ENCODE measurements at regions of chr6 and their contacts with region 1.

Region 1: DNA sequence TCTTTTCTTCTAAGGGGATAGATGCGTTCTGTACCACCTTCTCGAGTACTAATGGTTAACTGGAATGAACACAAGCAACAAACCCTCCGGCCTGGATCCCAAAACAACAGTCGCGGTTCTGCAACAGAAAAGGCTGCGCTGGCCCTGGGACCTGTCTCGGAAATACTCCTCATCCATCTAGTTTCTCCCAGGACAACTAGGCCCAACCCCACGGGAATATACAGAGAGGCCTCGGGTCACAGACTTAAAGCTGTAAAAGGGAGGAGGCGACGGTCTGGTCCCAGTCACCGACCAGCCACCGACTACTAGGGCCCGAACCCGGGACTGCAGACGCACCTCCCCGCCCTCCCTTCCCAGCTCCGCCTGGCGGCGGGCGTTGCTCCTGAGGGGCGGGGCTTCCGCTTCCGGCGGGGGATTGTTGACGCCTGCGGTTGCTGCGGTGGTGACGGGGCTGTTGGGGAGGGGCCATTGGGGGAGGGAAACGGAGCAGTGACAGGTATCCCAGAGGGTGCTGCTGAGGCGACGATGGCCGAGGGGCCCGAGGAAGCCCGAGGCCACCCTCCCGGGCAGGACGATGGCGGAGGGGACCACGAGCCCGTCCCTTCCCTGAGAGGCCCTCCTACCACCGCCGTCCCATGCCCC is at the start of gene FAM8A1:
- DNase-seq: peak; percentile 94 to 98
- H3K4me3 ChIP-seq: peak within 1 kb of the TSS; percentile 89 to 93
- H3K27ac ChIP-seq: peak within 1 kb of the TSS; percentile 90 to 99
- H3K4me1 ChIP-seq: peaks cover 0 to 16% (median 6%) of the 10 kb centered on the region in 4 donors
- H3K27me3 ChIP-seq: no peaks in the 10 kb centered on the region
- CTCF ChIP-seq: peak; percentile 73 to 81

Region 2: DNA sequence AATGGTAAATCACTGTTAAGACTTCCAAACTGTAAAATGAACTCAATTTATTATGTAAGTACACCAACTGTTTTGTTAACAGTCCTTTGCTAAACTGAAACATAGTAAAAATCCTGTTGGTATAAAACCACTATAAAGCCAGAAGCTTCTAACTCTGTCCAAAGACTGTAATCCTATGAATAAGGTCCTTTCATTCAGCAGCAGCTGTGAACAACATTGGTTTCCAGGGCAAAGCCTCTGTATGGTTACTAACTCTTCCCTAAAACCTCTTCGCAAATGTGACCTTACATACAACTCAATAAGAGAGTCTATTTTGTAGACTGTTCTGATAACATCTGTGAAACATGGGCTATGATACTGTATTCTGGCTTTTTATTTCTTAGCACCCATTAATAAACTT is 66.6 kb after region 1 on chr6:
- intact Hi-C with region 1: no loop called
- DNase-seq: no peak
- H3K4me3 ChIP-seq: no peak overlapping the region
- H3K27ac ChIP-seq: no peak overlapping the region
- H3K4me1 ChIP-seq: no peaks in the 10 kb centered on the region
- H3K27me3 ChIP-seq: no peaks in the 10 kb centered on the region
- CTCF ChIP-seq: no peak

Region 3: DNA sequence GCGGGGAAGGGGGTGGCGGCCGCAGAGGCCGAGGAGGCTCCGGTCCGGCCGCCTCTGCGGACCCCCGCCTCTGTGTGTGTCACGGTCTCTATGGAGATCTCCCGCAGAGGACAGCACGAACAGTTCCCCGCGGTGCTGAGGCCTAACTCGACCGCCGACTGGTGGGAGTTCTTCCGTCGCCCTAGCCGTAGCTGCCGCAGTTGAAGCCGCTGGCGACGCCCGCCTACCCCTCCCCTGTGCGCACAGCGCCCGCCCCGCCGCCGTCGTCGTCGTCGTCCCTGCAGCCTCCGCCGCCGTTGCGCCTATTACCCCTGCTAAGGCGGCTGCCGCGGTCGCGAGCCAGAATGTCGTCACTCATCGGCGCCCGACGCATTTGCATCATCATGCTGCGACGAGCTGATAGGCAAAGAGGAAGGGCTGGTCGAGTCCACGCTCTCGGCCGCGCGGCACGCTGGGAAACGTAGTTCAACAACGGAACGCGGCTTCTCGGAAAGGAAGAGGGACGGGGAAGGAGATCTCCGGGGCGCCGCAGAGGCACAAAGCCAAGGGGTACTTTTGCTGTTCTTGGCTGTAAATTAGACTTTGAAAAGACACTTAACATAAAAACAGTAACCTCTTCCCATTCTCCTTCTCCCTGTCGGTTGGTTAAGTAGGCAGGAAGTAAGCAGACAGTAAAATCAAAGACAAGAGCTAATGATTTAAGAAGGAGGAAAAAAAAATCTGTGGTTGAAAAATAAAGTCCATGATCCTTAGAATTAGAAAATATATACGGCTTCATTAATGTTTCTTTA is 106.8 kb after region 1 on chr6 and contains the start of gene NUP153:
- intact Hi-C with region 1: loop called (anchors 5 kb)
- DNase-seq: peak; percentile 98 to 99
- H3K4me3 ChIP-seq: peak within 1 kb of the TSS; percentile 90 to 95
- H3K27ac ChIP-seq: peak within 1 kb of the TSS; percentile 100
- H3K4me1 ChIP-seq: peaks cover 0 to 34% (median 30%) of the 10 kb centered on the region in 4 donors
- H3K27me3 ChIP-seq: no peaks in the 10 kb centered on the region
- CTCF ChIP-seq: peak in 1 of 2 experiments; percentile 20

Region 4: GRCh38 chr6:17798477-17799154 is 198.6 kb after region 1 on chr6:
- intact Hi-C with region 1: loop called (anchors 5 kb)
- DNase-seq: no peak
- H3K4me3 ChIP-seq: no peak overlapping the region
- H3K27ac ChIP-seq: no peak overlapping the region
- H3K4me1 ChIP-seq: no peaks in the 10 kb centered on the region
- H3K27me3 ChIP-seq: no peaks in the 10 kb centered on the region
- CTCF ChIP-seq: no peak

Region 5: DNA sequence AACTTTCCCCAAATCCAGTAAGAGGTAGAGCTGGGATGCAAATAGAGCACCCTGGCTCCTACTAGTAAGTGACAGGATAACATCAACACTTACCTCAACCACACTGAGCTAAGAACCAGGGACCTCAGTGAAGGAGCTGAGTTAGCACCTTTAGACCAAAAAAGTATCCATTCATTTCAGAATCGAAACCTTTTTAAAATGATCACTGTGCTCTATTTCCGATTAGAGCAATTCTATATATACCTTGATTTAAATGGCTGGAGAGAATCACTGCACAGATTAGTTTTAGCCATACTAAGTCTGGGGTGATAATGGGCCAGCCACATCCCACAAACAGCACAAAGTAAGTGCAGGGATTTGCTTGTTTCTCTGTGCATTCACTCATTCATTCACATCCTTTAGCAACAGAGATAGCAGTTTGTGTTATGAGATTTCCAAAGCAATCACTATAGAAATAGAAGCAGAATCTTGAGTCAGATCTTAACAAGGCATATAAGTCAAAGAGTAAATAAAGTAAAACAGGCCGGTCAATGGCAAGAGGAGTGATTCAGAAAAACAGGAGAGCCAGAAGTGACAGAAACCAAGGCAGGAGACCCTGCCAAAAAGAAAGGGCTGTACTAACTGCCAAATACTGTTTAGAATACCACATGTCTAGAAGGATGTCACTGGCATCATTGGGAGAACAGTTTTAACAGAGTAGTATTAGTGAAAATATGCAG is 251.2 kb after region 1 on chr6:
- intact Hi-C with region 1: no loop called
- DNase-seq: no peak
- H3K4me3 ChIP-seq: no peak overlapping the region
- H3K27ac ChIP-seq: peak overlapping the region; percentile 32 to 45
- H3K4me1 ChIP-seq: peaks cover 0 to 32% (median 13%) of the 10 kb centered on the region in 4 donors
- H3K27me3 ChIP-seq: no peaks in the 10 kb centered on the region
- CTCF ChIP-seq: no peak